WTC11 (cell line): ENCODE measurements at regions of chr1 and their contacts with region 1.

Region 1: DNA sequence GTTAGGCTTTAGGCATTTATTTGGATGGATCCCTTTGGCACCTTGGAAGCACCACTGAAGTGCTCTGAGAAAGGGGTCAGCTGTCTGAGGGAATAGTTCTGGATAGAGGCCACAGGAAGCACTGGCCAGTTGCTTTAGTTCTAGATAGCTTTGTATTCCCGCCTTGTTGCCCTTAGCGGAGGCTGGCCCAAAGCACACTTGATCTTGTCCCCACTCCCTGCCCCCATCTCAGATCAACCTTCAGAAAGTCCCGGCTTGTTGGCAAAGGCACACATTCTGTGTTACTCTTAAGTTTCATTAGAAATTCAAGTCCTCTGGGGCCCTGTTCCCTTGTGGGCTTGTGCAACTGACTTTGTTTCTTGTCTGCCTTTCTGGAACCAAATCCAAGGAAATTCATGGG is 15.2 kb upstream of the NBL1 start:
- DNase-seq: no peak
- ATAC-seq: no peak; the same call in 1 of the 2 replicates
- H3K4me3 Mint-ChIP-seq: no peak overlapping the region
- H3K27ac Mint-ChIP-seq: 0 out of 2 replicates have a peak overlapping the region, but pooled peaks have one; percentile 81
- H3K4me1 Mint-ChIP-seq: peaks cover 18% of the 10 kb centered on the region
- H3K27me3 Mint-ChIP-seq: no peaks in the 10 kb centered on the region
- CTCF ChIP-seq: no peak

Region 2: DNA sequence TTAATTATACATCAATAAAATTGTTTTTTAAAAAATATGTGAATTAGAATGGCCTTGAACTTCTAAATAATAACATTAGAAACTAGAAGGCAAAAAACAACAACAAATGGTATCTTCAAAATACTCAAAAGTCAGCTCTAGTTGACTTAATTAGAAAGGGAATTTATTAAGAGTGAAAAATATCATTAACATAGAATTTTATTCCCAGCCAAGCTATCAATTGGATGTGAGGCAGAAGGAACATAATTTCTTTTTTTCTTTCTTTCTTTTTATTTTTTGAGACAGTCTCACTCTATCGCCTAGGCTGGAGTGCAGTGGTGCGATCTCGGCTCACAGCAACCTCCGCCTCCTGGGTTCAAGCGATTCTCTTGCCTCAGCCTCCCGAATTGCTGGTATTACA is 92.4 kb before region 1 on chr1:
- CTCF ChIA-PET with region 1: no interaction called
- POLR2A ChIA-PET with region 1: no interaction called
- DNase-seq: no peak
- ATAC-seq: no peak
- H3K4me3 Mint-ChIP-seq: no peak overlapping the region
- H3K27ac Mint-ChIP-seq: no peak overlapping the region
- H3K4me1 Mint-ChIP-seq: no peaks in the 10 kb centered on the region
- H3K27me3 Mint-ChIP-seq: peaks cover 6% of the 10 kb centered on the region
- CTCF ChIP-seq: no peak

Region 3: GRCh38 chr1:19643602-19644394 is 14.9 kb after region 1 on chr1 and contains the start of gene NBL1:
- CTCF ChIA-PET with region 1: interaction called, 22 read pairs
- POLR2A ChIA-PET with region 1: no interaction called
- DNase-seq: no peak
- ATAC-seq: peak; percentile 12
- H3K4me3 Mint-ChIP-seq: peak within 1 kb of the TSS; percentile 94
- H3K27ac Mint-ChIP-seq: no peak within 1 kb of the TSS
- H3K4me1 Mint-ChIP-seq: peaks cover 25% of the 10 kb centered on the region
- H3K27me3 Mint-ChIP-seq: peaks cover 56% of the 10 kb centered on the region
- CTCF ChIP-seq: no peak
- total RNA-seq, gene NBL1: 8.8 to 17.1 TPM (median 10.2 TPM) in 3 replicates